Activated naive CD4-positive, alpha-beta T cell treated with anti-CD3 and anti-CD28 coated beads for 36 hours (primary cell): ENCODE measurements at regions of chr3 and their contacts with region 1.

Region 1: GRCh38 chr3:150737874-150738713 is 24.9 kb downstream of the SIAH2 start:
- DNase-seq: peak; percentile 81
- H3K4me3 Mint-ChIP-seq: peak overlapping the region; percentile 41
- H3K27ac Mint-ChIP-seq: peak overlapping the region; percentile 99
- H3K4me1 Mint-ChIP-seq: peaks cover 77% of the 10 kb centered on the region
- H3K27me3 Mint-ChIP-seq: no peaks in the 10 kb centered on the region

Region 2: DNA sequence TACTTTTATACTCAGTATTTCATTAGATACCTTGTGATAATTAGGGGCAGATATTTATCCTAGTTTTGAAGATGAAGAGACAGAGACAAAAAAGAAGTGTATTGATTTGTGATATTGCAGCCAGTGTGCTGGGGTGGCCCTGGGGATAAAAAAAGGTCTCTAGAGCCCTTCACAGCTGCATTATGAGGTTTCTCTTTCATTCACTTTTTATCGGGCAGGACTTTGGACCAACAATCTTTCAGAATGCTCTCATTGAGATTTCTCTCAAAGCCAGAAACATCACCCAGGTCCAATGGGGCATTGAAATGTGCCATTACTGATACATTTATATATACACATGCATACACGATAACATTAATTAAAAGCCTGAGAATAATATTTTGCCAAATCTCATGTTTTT is 155.5 kb before region 1 on chr3:
- CTCF ChIA-PET with region 1: no interaction called
- intact Hi-C with region 1: loop called (anchors 1 kb)
- DNase-seq: no peak
- H3K4me3 Mint-ChIP-seq: no peak overlapping the region
- H3K27ac Mint-ChIP-seq: peak overlapping the region; percentile 81
- H3K4me1 Mint-ChIP-seq: peaks cover 8% of the 10 kb centered on the region
- H3K27me3 Mint-ChIP-seq: no peaks in the 10 kb centered on the region

Region 3: DNA sequence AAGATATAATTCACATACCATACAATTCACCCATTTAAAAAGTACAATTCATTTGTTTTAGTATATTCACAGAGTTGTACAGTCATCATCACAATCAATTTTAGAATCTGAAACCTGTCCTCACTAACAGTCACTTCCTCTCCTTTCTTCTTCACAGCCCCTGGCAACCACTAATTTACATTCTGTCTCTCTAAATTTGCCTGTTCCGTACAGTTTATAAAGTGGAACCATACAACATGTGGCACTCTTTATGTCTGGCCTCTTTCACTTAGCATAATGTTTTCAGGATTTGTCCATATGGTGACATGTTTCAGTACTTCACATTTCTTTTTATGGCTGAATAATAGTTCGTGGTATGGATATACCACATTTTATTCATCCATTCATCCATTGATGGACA is 57.0 kb before region 1 on chr3:
- CTCF ChIA-PET with region 1: no interaction called
- intact Hi-C with region 1: loop called (anchors 1 kb)
- DNase-seq: peak; percentile 23
- H3K4me3 Mint-ChIP-seq: no peak overlapping the region
- H3K27ac Mint-ChIP-seq: peak overlapping the region; percentile 31
- H3K4me1 Mint-ChIP-seq: peaks cover 16% of the 10 kb centered on the region
- H3K27me3 Mint-ChIP-seq: no peaks in the 10 kb centered on the region

Region 4: GRCh38 chr3:150751753-150752263 is 13.7 kb after region 1 on chr3:
- CTCF ChIA-PET with region 1: no interaction called
- intact Hi-C with region 1: loop called (anchors 1 kb)
- DNase-seq: no peak
- H3K4me3 Mint-ChIP-seq: no peak overlapping the region
- H3K27ac Mint-ChIP-seq: peak overlapping the region; percentile 56
- H3K4me1 Mint-ChIP-seq: peaks cover 84% of the 10 kb centered on the region
- H3K27me3 Mint-ChIP-seq: no peaks in the 10 kb centered on the region

Region 5: DNA sequence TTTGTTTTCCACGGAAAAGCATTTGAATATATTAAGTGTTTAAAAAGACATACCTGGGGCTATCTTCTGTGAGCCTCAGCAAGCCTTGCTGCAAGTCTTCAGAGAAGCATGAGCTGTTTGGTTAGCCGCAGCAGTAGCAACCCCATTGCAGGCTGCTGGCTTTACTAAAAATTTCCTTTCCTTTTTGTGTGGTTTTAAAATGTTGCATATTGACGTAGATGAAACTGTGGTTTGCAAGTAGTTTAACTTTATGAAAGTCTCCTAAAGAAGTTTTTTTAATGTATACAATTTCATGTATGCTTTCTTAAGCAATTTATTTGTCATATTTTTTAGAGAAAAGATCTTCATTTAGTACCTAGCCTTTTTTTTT is 464.9 kb after region 1 on chr3 and contains the start of gene GPR171:
- CTCF ChIA-PET with region 1: no interaction called
- intact Hi-C with region 1: loop called (anchors 1 kb)
- DNase-seq: peak; percentile 81
- H3K4me3 Mint-ChIP-seq: peak within 1 kb of the TSS; percentile 94
- H3K27ac Mint-ChIP-seq: peak within 1 kb of the TSS; percentile 100
- H3K4me1 Mint-ChIP-seq: peaks cover 60% of the 10 kb centered on the region
- H3K27me3 Mint-ChIP-seq: no peaks in the 10 kb centered on the region
- total RNA-seq, gene GPR171: 42.8 to 46.9 TPM

Region 6: GRCh38 chr3:151305101-151305750 is 567.1 kb after region 1 on chr3:
- CTCF ChIA-PET with region 1: no interaction called
- intact Hi-C with region 1: loop called (anchors 2 kb)
- DNase-seq: peak; percentile 37
- H3K4me3 Mint-ChIP-seq: no peak overlapping the region
- H3K27ac Mint-ChIP-seq: no peak overlapping the region
- H3K4me1 Mint-ChIP-seq: peaks cover 59% of the 10 kb centered on the region
- H3K27me3 Mint-ChIP-seq: peaks cover 18% of the 10 kb centered on the region